T-cell (primary cell): ENCODE measurements at regions of chr1 and their contacts with region 1.

Region 1: DNA sequence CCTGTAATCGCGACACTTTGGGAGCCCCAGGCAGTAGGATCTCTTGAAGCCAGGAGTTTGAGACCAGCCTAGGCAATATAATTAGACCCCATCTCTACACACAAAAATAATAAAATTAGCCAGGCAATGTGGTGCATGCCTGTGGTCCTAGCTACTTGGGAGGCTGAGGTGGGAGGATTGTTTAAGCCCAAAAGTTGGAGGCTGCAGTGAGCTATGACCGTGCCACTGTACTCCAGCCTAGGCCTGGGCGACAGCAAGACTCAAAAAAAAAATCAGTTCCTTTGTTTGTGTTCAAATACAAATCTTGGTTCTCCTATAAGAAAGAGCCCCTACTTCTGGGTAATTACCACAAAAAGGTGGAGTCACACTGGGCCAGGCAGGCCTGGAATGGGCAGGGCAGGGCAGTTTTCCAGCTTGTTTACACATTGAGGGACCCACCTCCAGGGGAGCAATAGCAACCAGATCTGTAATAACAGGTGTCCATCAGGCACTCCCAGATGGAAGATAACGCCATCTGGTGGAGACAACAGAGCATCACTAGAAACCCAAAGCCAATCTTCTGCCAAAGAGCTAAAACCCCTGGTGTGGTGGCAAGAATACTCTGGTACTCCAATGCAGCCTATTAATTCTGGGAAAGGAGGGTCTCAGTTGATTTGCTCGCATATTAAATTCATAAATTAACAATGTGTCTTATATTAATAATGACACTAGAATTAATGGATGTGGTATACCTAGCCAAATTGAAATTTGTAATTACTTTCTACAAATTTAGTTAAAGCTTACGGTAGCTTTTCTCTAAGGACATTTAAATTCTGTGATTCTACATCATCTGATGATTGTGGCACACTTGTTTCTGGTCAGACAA is 13.2 kb downstream of the PPP1R15B start:
- DNase-seq: peak in 33 of 35 experiments; percentile 11 to 81 (median 44)
- ATAC-seq: peak; percentile 81 to 95 (median 88)
- H3K4me3 ChIP-seq: no peak overlapping the region
- H3K4me3 Mint-ChIP-seq: no peak overlapping the region
- H3K27ac ChIP-seq: peak overlapping the region; percentile 36
- H3K27ac Mint-ChIP-seq: peak overlapping the region; percentile 80 to 86
- H3K4me1 ChIP-seq: no peaks in the 10 kb centered on the region
- H3K4me1 Mint-ChIP-seq: peaks cover 2 to 11% (median 6%) of the 10 kb centered on the region in 3 donors
- H3K27me3 ChIP-seq: no peaks in the 10 kb centered on the region
- H3K27me3 Mint-ChIP-seq: no peaks in the 10 kb centered on the region

Region 2: GRCh38 chr1:204363335-204364124 is 34.9 kb before region 1 on chr1:
- CTCF ChIA-PET with region 1: interaction called, 6 to 17 read pairs
- POLR2A ChIA-PET with region 1: no interaction called
- DNase-seq: peak; percentile 50 to 90 (median 66)
- ATAC-seq: peak; percentile 85 to 92 (median 90)
- H3K4me3 ChIP-seq: peak overlapping the region; percentile 54 to 57
- H3K4me3 Mint-ChIP-seq: peak overlapping the region; percentile 42 to 83 (median 72)
- H3K27ac ChIP-seq: peak overlapping the region; percentile 20
- H3K27ac Mint-ChIP-seq: peak overlapping the region; percentile 59 to 85
- H3K4me1 ChIP-seq: peaks cover 0 to 17% of the 10 kb centered on the region in 2 experiments
- H3K4me1 Mint-ChIP-seq: peaks cover 9 to 16% (median 12%) of the 10 kb centered on the region in 3 donors
- H3K27me3 ChIP-seq: peaks cover 0 to 33% of the 10 kb centered on the region in 2 experiments
- H3K27me3 Mint-ChIP-seq: peaks cover 5 to 9% of the 10 kb centered on the region in 2 donors

Region 3: GRCh38 chr1:204377795-204378608 is 20.4 kb before region 1 on chr1:
- CTCF ChIA-PET with region 1: interaction called, 5 to 18 read pairs
- POLR2A ChIA-PET with region 1: interaction called, 3 to 4 read pairs
- DNase-seq: peak in 34 of 35 experiments; percentile 20 to 64 (median 40)
- ATAC-seq: peak; percentile 74 to 77 (median 75)
- H3K4me3 ChIP-seq: peak overlapping the region; percentile 59 to 69
- H3K4me3 Mint-ChIP-seq: peak overlapping the region; percentile 83 to 85 (median 84)
- H3K27ac ChIP-seq: no peak overlapping the region
- H3K27ac Mint-ChIP-seq: peak overlapping the region in 1 of 2 donors; percentile 40
- H3K4me1 ChIP-seq: peaks cover 8 to 18% of the 10 kb centered on the region in 2 experiments
- H3K4me1 Mint-ChIP-seq: peaks cover 11 to 14% (median 14%) of the 10 kb centered on the region in 3 donors
- H3K27me3 ChIP-seq: peaks cover 0 to 41% of the 10 kb centered on the region in 2 experiments
- H3K27me3 Mint-ChIP-seq: peaks cover 0 to 28% of the 10 kb centered on the region in 2 donors

Region 4: DNA sequence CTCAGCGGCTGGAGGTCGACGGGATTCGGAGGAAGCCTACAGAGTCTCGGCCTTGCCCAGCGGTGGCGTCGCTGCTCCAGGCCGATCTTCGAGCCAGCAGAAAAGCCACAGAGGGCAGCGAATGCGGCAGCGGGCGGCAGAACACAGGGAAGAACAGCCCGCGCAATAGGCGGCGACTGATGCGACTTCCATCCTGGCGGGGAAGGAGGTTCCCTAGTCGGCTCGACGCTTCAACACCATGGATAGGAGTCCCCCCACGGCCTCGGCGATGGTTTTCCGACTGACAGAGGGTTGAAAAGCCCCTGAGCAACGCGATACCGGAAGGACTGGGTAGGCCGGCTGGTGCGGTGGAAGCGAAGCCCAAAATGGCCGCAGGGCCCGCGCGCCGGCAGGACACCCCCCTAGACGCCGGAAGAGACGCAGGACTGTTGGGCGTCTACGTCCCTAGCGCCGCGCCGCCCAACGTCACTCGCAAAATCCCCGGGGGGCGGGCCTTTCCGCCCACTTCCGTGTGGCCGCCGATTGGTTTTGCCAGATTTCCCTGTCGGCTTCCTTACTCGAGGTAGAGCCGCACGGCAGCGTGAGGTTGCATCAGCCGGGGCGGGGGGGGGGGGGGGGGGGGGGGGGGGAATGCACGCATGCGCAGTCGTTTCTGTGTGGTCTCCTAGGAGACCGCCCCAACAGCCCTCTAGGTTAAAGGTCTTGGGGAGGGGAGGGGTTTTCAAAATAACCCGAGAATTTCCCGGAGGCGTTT is 13.2 kb after region 1 on chr1 and contains the start of gene PPP1R15B:
- CTCF ChIA-PET with region 1: interaction called, 7 to 53 read pairs
- POLR2A ChIA-PET with region 1: interaction called, 6 to 15 read pairs
- DNase-seq: peak; percentile 92 to 99 (median 97)
- ATAC-seq: peak; percentile 91 to 95 (median 92)
- H3K4me3 ChIP-seq: peak within 1 kb of the TSS; percentile 96 to 100
- H3K4me3 Mint-ChIP-seq: peak within 1 kb of the TSS; percentile 98 to 99 (median 98)
- H3K27ac ChIP-seq: peak within 1 kb of the TSS; percentile 100
- H3K27ac Mint-ChIP-seq: peak within 1 kb of the TSS; percentile 99 to 100
- H3K4me1 ChIP-seq: peaks cover 4 to 9% of the 10 kb centered on the region in 2 experiments
- H3K4me1 Mint-ChIP-seq: peaks cover 10 to 24% (median 11%) of the 10 kb centered on the region in 3 donors
- H3K27me3 ChIP-seq: no peaks in the 10 kb centered on the region
- H3K27me3 Mint-ChIP-seq: no peaks in the 10 kb centered on the region
- total RNA-seq, gene PPP1R15B: 67.9 to 151 (median 70.6) TPM

Region 5: DNA sequence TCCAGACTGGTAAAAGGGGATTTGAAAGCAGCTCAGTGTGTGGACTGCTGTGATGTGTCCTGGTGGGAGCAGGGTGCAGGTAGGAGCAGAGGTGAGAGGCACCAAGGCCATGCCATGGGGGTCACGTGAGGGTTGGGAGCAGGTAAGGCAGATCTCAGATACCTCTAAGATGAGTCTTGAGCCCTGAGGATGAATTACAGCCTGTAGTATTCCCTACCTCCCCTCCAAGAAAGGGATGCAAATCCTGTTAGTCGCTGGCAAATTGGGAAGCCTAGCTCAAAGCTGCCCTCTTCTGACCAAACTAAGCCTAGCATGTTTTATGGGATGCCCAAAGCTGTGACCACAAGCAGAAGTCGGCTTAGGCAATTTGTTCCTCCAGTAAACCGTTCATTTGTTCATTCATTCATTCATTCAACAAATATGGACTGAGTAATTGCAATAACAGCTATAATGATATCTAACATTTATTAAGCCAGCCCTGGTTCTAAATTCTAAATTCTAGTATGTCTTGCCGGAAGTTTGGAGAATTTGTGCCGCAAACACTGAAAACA is 927.0 kb after region 1 on chr1:
- CTCF ChIA-PET with region 1: no interaction called
- POLR2A ChIA-PET with region 1: no interaction called
- DNase-seq: peak in 27 of 35 experiments; percentile 12 to 82 (median 39)
- ATAC-seq: no peak
- H3K4me3 ChIP-seq: no peak overlapping the region
- H3K4me3 Mint-ChIP-seq: no peak overlapping the region
- H3K27ac ChIP-seq: no peak overlapping the region
- H3K27ac Mint-ChIP-seq: peak overlapping the region; percentile 60 to 61
- H3K4me1 ChIP-seq: peaks cover 5 to 41% of the 10 kb centered on the region in 2 experiments
- H3K4me1 Mint-ChIP-seq: peaks cover 28 to 50% (median 36%) of the 10 kb centered on the region in 3 donors
- H3K27me3 ChIP-seq: peaks cover 0 to 20% of the 10 kb centered on the region in 2 experiments
- H3K27me3 Mint-ChIP-seq: peaks cover 8 to 9% of the 10 kb centered on the region in 2 donors